Right ventricle myocardium inferior (tissue), 1 donor: ENCODE measurements at regions of chr5 and their contacts with region 1.

Region 1: DNA sequence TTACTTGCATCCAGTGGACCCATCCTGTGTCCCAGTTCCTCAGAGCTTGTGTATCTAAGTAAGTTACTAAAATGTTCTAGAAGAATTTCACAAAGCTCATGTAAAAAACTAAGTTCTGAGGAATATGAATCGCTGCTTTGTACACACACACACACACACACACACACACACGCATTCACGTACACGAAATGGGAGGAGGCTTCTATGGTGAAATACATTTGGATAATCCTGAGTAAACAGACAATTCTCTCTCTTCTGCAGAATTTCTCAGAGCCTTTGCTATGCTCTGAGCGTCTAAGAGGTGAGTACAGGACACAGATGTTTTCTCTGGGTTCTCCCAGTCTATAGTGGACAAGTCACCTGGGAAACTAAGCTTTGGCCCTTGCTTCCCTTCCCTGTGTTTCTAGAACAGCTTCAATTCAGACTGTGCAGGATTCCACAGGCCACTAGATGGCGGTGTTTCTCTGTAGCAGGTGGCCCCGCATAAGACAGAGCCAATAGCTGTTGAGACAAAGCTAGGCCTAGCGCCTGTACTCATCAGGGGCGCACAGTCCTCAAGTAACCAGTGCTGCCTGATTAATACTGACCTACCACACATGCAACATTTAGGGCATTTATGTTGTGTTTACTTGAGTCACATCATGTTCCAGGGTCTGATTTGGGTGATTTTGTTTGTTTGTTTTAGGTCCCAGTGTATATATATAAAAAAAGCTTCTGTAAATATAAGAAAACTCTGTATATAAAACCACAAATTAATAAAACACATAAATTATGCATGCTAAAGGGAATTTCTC is 114.8 kb downstream of the LIFR start:
- DNase-seq: peak; percentile 83
- ATAC-seq: peak; percentile 99

Region 2: DNA sequence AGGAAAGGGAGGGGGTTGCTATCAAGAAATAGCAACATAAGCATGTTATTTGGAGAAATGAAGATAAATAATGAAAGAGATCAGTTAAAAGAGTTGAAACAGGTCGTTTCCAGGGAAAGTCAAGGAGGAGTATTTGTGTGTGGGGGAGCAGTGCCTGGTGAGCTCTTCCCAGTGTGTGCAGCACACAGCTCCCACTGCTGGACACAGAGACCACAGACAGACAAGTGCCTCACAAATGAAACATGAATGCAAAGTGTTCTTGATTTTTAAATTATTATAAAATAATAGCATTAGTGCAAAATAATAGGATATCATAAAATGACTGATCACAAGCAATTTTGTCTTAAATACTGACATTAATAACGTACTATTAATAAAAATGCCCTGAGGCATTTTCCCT is 74.0 kb after region 1 on chr5:
- intact Hi-C with region 1: loop called (anchors 5 kb)
- DNase-seq: no peak
- ATAC-seq: no peak

Region 3: DNA sequence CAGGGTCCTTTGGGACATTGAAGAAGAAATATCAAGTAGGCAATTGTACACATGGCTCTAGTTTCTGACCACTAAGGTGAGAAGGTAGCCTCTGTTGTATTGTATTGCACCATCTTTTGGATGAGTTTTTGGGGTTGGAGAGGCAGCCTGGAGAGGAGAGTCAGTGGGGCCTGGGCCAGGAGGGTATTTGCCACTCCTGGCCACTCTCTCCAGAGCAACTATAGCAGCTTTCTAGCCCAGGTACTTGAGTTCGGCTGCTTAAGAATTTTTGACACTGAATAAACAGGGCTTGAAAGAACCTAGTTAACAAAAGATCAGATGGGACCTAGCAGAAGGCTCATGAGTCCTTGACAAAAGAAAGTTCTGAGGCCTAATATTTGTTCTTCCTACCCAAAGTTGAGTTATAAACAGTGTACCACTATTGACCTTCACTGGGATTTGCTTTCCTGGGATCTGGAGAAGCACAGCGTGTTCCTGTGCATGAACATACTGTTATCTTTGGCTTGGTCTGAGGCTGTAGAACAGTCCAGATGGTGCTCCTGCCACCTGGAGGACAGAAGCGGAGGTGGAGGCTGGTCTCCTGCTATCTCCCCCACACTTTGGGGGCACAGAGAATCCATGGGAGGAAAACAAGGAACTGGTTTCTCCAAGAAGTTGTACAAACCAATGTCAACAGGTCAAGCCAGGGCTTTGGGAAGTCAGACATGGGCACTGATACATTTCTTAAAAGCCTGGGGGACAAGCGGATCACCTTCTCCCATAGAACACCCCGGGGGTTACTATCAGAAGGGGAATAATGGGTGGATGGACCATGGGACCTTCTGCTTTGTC is 225.2 kb after region 1 on chr5:
- intact Hi-C with region 1: loop called (anchors 2 kb)
- DNase-seq: no peak
- ATAC-seq: peak; percentile 95